Aorta (tissue), 5 donors: ENCODE measurements at regions of chr1 and their contacts with region 1.

Region 1: DNA sequence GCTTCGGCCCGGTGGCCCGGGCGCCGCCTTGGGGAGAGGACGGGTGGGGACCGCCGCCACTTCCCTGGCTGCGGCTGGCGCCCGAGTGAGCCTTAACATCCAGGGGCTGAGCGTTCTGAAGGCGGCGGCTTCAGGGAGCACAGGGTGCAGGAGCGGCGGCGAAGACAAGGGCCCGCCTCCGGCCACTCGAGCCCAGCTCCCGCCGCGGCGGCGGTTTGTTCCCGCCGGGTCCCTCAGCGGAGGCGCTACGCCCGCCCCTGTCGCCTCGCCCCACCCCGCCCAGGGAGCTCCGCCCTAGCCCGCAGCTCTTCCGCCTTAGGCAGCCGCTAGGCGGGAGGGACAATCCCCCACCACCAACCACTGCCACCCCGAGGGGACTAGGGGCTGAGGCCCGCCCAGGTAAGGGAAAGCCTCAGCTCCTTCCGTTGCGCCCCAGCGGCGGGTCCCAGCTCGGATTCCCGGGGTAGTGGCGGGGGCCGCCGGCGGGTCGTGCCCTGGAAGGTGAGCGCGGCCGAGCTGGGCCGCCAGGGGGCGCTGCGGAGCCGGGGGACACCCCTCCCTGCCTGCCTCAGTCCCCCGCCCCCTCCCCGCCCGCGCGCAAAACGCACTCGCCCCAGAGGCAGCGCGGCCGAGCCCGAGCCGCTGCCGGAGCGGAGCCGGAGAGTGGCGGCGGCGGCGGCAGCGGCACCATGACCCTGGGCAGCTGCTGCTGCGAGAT is at the start of gene FOXD2:
- DNase-seq: peak; percentile 93 to 97
- ATAC-seq: peak; percentile 93
- H3K4me3 ChIP-seq: peak within 1 kb of the TSS; percentile 57 to 84
- H3K27ac ChIP-seq: peak within 1 kb of the TSS; percentile 58 to 77
- H3K4me1 ChIP-seq: no peaks in the 10 kb centered on the region
- H3K27me3 ChIP-seq: no peaks in the 10 kb centered on the region
- total RNA-seq, gene FOXD2: 1.6 to 2.7 TPM

Region 2: DNA sequence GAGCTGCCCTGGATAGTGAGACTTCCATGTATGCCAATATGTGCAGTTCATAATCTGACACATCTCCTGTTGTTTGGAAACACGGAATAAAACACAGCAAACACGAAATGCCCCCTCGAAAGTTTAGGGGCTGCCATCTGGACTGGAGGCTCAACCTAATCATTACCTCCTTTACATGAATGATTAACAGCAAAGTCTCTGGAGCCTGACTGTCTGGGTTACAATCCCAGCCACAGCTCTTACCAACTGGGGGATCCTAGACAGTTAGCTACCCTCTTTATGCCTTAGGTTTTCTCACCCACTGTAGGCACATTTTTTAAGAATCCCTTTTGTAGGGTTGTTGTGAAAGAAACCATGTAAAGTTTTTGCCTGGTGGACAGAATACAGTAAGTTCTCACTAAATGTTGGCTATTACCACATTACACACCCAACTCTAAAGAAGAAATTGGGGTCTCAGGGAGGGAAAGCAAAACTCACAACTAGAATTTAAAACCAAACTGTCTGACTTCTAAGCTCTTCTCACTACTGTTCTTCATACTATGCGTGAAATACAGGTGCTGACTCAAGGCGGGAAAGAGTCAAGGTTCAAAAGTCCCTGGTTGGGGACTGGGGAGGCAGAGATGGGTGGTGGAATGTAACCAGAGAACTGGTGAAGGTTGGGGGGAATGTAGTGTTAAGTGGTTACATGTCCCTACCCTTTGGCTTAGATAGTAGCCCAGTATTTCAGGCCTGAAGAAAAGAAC is 276.1 kb before region 1 on chr1:
- intact Hi-C with region 1: no loop called
- DNase-seq: no peak
- ATAC-seq: no peak
- H3K4me3 ChIP-seq: no peak overlapping the region
- H3K27ac ChIP-seq: no peak overlapping the region
- H3K4me1 ChIP-seq: no peaks in the 10 kb centered on the region
- H3K27me3 ChIP-seq: peaks cover 0 to 2% of the 10 kb centered on the region in 2 donors

Region 3: GRCh38 chr1:47388891-47389238 is 48.7 kb before region 1 on chr1:
- intact Hi-C with region 1: no loop called
- DNase-seq: peak; percentile 61 to 83
- ATAC-seq: peak; percentile 87
- H3K4me3 ChIP-seq: no peak overlapping the region
- H3K27ac ChIP-seq: no peak overlapping the region
- H3K4me1 ChIP-seq: no peaks in the 10 kb centered on the region
- H3K27me3 ChIP-seq: no peaks in the 10 kb centered on the region

Region 4: DNA sequence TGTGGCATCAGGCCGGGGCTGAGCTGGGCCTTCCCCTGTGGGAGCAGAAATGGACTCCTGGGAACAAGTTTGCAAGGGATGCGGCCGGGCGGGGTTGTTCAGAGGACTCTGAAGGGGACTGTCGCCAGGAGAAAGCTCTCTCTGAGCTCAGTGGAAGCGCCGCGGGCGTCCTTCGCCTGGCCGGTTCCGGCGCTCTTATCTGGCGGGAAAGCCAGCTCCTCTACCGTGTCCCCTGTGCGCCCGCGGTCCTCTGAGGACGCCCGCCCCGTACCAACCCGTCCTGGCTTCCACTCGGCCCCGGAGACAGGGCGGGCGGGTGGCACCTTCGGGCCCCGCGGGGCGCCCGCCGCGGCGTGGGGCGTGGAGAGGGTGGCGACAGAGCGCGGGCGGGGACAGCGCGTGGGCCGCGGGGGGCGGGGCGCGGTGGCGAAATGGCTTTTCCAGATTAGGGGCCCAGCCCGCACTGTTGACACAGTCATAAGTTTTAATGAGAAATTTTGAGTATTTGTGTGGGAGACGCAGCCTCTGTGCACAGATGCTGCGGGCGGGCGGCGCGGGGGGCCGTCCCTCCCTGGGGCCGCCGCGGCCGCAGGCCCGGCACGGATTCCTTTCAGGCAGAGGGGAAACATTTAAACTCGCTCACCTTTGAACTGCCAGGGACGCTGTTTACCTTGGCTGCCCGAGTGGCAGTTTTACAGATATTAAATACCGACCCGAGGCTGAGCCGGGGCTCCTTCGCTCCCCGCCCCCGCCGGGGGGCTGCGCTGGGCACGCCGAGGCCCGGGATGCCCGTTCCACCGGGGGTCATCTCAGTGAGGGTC is 70.5 kb after region 1 on chr1:
- intact Hi-C with region 1: loop called (anchors 5 kb)
- DNase-seq: peak; percentile 44 to 81
- ATAC-seq: peak; percentile 79
- H3K4me3 ChIP-seq: peak overlapping the region; percentile 47 to 49
- H3K27ac ChIP-seq: peak overlapping the region in 1 of 2 donors; percentile 6
- H3K4me1 ChIP-seq: no peaks in the 10 kb centered on the region
- H3K27me3 ChIP-seq: no peaks in the 10 kb centered on the region

Region 5: GRCh38 chr1:47608296-47608875 is 170.8 kb after region 1 on chr1:
- intact Hi-C with region 1: no loop called
- DNase-seq: no peak
- ATAC-seq: no peak
- H3K4me3 ChIP-seq: no peak overlapping the region
- H3K27ac ChIP-seq: no peak overlapping the region
- H3K4me1 ChIP-seq: no peaks in the 10 kb centered on the region
- H3K27me3 ChIP-seq: no peaks in the 10 kb centered on the region

Region 6: GRCh38 chr1:47656719-47657685 is 219.4 kb after region 1 on chr1:
- intact Hi-C with region 1: loop called in 1 of 2 experiments (anchors 5 kb)
- DNase-seq: peak; percentile 92 to 93
- ATAC-seq: peak; percentile 91
- H3K4me3 ChIP-seq: no peak overlapping the region
- H3K27ac ChIP-seq: peak overlapping the region; percentile 99 to 100
- H3K4me1 ChIP-seq: peaks cover 2 to 10% of the 10 kb centered on the region in 2 donors
- H3K27me3 ChIP-seq: no peaks in the 10 kb centered on the region

Region 7: DNA sequence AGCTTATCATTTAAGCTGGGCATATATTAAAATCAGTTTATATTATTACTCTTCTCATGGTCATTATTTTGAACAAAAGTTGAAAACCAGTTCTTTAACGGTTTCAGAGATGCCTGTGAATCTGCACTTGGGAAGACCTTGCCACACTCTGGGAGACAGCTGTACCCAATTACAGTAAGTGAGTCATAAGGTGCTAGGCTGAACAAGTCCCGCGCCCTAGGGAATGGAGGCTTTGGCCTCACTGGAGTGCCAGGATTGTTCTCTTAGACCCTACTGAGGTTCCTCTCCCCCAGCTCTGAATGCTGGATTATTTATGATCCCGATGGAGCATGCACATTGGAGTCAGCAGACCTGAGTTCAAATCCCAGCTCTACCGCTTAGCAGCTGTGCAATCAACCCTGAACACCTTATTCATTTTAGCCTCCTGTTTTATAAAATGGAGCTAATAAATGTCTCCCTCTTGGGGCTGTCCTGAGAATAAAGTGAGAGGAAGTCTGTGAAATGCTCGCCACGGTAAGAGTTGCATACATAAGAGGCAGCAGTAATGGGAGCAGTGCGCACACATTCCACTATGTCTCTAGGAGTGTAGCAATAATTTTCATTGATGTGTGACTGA is 266.5 kb after region 1 on chr1:
- intact Hi-C with region 1: loop called in 1 of 2 experiments (anchors 5 kb)
- DNase-seq: peak in 1 of 2 donors; percentile 56
- ATAC-seq: no peak
- H3K4me3 ChIP-seq: no peak overlapping the region
- H3K27ac ChIP-seq: no peak overlapping the region
- H3K4me1 ChIP-seq: no peaks in the 10 kb centered on the region
- H3K27me3 ChIP-seq: no peaks in the 10 kb centered on the region